Mucosa of descending colon (tissue), 3 donors: ENCODE measurements at regions of chrX and their contacts with region 1.

Region 1: GRCh38 chrX:118595501-118596042 is 100.0 kb downstream of the DOCK11 start:
- DNase-seq: no peak
- ATAC-seq: no peak
- H3K4me3 ChIP-seq: no peak overlapping the region
- H3K4me1 ChIP-seq: no peaks in the 10 kb centered on the region
- CTCF ChIP-seq: no peak

Region 2: DNA sequence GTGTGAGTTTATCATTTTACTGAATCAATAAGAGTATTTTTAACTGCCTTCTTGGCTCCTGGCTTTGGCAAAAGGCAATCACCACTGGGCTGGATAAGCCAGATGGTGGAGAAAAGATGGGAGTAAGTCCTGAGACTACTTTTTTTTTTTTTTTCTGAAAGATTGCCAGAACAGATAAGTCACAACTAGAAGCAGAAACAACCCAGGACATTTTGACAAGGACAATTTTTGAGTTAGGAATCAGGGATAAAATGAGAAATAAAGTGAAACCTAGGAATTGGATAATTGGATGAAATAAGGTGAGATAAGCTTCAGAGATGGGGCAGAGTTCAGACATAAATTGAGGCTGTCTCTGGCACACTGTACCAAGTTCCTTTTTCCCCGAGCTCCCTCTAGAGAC is 949.9 kb before region 1 on chrX:
- intact Hi-C with region 1: no loop called
- DNase-seq: no peak
- ATAC-seq: no peak
- H3K4me3 ChIP-seq: no peak overlapping the region
- H3K4me1 ChIP-seq: no peaks in the 10 kb centered on the region
- CTCF ChIP-seq: no peak

Region 3: GRCh38 chrX:118474586-118474985 is 121.0 kb before region 1 on chrX:
- intact Hi-C with region 1: loop called in 1 of 2 experiments (anchors 10 kb)
- DNase-seq: no peak
- ATAC-seq: no peak
- H3K4me3 ChIP-seq: no peak overlapping the region
- H3K4me1 ChIP-seq: no peaks in the 10 kb centered on the region
- CTCF ChIP-seq: no peak